Naive thymus-derived CD4-positive, alpha-beta T cell (primary cell): ENCODE measurements at regions of chr7 and their contacts with region 1.

Region 1: DNA sequence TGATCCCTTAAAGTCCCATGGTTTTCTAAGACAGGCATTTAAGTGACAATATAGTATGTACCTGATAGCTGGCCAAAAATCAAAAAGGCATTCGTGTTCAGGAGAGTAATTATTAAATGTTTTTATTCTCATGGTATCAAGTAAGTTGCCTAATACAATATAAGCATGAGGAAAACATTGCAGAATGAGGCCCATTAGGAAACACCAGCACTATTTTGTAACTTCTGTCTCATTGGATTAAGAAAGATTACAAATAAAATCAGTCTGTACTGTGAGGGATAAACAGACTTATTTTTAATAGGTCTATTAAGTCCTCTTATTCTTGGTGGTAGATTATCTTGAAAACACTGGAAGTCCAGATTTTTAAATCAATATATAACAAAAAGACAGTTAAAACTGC is 110.1 kb downstream of the SNX13 start:
- DNase-seq: no peak
- ATAC-seq: no peak
- H3K4me3 ChIP-seq: no peak overlapping the region
- H3K4me3 Mint-ChIP-seq: no peak overlapping the region
- H3K27ac ChIP-seq: no peak overlapping the region
- H3K27ac Mint-ChIP-seq: no peak overlapping the region
- H3K4me1 ChIP-seq: no peaks in the 10 kb centered on the region
- H3K4me1 Mint-ChIP-seq: no peaks in the 10 kb centered on the region
- H3K27me3 ChIP-seq: no peaks in the 10 kb centered on the region
- H3K27me3 Mint-ChIP-seq: no peaks in the 10 kb centered on the region

Region 2: DNA sequence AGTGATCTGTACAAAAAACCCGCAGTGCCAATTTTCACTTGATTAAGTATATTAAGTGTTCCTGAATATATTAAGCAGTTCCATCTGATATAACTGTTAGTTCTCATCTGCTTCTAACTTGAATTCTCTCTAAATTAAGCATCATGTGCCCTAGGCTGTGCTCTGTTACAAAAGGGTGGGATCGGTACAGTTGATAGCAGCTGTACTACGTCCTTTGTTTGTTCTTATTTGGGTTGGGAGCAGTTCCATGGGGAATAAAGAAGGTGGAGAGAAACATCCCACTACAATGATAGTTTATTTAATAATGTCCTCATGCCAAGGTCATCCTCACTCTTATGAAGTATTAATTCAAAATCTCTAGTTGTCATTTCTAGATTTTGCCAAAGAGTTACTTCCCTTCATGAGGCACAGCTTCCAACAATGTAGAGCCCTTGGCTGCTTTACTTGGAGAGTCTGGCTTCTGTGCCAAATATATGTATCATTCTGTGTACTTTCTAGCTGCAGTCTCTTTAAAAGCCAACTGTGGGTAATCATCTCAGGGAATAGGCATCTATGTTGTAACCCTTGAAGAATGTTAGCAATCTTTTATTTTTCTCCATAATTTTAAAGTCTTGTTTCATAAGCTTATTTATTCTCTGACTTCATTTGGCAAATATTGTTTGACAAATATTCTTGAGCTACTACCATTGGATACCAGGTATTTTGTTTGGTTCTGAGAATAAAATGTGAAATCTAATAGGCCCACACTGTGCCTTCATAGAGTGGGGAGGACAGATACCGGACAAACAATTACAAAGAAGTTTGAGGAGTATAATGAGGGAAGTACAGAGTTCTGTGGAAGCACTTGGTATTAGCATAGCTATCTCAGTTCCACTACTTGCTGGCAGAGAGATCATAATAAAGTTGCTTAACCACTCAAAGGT is 554.2 kb before region 1 on chr7:
- CTCF ChIA-PET with region 1: no interaction called
- POLR2A ChIA-PET with region 1: no interaction called
- intact Hi-C with region 1: no loop called
- DNase-seq: no peak
- ATAC-seq: no peak
- H3K4me3 ChIP-seq: no peak overlapping the region
- H3K4me3 Mint-ChIP-seq: no peak overlapping the region
- H3K27ac ChIP-seq: no peak overlapping the region
- H3K27ac Mint-ChIP-seq: no peak overlapping the region
- H3K4me1 ChIP-seq: peaks cover 0 to 7% of the 10 kb centered on the region in 2 donors
- H3K4me1 Mint-ChIP-seq: peaks cover 7 to 17% (median 12%) of the 10 kb centered on the region in 7 donors
- H3K27me3 ChIP-seq: no peaks in the 10 kb centered on the region
- H3K27me3 Mint-ChIP-seq: no peaks in the 10 kb centered on the region

Region 3: DNA sequence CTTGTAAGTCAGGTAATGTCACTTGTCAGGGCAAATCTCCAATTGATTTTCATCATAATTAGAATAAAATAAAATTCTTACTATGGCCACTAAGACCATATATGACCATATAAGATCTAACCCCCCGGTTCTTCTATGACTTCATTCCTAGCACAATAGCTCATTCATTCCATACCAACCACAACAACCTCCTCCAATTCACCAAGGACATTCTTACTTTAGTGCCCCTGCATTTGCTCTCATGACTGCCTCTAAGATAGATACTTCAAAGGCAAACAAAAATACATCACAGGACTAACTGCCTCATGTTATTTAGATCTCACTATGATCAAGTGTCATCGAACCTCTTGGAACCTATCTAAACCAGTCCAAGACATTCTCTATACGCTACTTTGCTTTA is 19.3 kb after region 1 on chr7:
- CTCF ChIA-PET with region 1: no interaction called
- POLR2A ChIA-PET with region 1: no interaction called
- intact Hi-C with region 1: loop called in 1 of 2 experiments (anchors 2 kb)
- DNase-seq: no peak
- ATAC-seq: no peak
- H3K4me3 ChIP-seq: no peak overlapping the region
- H3K4me3 Mint-ChIP-seq: no peak overlapping the region
- H3K27ac ChIP-seq: no peak overlapping the region
- H3K27ac Mint-ChIP-seq: peak overlapping the region in 1 of 9 donors; percentile 9
- H3K4me1 ChIP-seq: no peaks in the 10 kb centered on the region
- H3K4me1 Mint-ChIP-seq: peaks cover 9 to 30% (median 22%) of the 10 kb centered on the region in 7 donors
- H3K27me3 ChIP-seq: no peaks in the 10 kb centered on the region
- H3K27me3 Mint-ChIP-seq: no peaks in the 10 kb centered on the region